Posterior cingulate gyrus (tissue), 11 donors: ENCODE measurements at regions of chr16 and their contacts with region 1.

Region 1: DNA sequence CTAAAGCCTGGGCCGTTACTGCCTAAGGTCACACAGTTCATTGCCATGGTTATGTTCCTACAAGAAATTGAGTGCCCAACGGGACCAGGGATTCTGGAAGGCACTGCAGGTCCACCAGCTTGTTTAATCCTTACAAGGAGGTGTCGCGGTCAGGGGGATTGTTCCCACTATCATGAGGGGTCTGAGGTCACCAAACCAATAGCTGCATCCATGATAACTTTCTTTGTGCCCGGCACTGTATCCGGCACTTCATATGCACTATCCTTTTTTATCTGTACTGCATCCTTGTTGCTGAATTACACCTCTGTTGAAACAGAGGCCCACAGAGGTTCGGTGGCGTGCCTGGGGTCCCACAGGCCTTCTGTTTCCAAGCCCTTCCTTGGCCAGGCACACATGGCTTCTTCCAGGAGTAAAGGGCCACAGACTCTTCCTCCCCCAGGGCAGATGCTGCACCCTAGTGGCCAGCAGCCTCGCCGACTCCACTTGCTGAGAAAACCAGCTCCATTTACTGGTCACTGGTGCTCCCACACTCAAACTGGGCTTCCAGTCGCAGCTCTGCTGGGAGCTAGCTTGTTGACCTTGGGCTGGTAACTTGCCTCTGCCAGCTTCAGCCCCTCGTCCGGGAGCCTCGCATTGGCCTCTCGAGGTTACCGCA is 82.0 kb upstream of the PLCG2 start:
- DNase-seq: peak in 8 of 10 donors; percentile 38 to 93 (median 58)

Region 2: GRCh38 chr16:81623363-81624102 is 73.6 kb before region 1 on chr16:
- intact Hi-C with region 1: loop called (anchors 10 kb)
- DNase-seq: peak in 6 of 10 donors; percentile 22 to 64 (median 58)

Region 3: DNA sequence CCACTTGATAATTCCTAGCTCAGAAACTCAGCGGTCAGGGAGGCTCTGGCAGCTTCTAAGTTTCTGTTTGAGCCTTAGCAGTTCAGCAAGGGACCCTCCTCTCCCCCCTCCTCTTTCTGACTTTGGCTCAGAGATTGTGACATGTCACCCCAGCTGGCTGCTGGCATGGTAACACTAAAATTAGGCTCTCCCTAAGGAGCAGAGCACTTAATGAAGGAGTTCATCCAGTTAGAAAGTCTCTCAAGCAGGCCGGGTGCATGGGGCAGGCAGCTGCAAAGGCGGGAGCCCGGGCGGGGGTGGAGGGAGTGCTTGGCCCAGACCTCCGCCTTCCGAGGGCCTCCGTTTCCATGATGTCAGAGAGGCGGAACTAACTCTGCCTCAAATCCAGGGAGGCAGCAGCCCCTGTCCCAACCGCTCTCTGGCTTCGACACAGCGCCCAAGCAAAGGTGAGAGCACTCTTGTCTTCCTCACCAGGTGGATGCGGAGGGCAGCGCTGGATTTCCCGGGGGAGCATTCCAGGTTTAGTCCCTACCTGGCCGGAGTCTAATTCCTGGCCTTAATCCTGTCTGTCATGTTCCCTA is 46.0 kb before region 1 on chr16:
- intact Hi-C with region 1: no loop called
- DNase-seq: no peak

Region 4: DNA sequence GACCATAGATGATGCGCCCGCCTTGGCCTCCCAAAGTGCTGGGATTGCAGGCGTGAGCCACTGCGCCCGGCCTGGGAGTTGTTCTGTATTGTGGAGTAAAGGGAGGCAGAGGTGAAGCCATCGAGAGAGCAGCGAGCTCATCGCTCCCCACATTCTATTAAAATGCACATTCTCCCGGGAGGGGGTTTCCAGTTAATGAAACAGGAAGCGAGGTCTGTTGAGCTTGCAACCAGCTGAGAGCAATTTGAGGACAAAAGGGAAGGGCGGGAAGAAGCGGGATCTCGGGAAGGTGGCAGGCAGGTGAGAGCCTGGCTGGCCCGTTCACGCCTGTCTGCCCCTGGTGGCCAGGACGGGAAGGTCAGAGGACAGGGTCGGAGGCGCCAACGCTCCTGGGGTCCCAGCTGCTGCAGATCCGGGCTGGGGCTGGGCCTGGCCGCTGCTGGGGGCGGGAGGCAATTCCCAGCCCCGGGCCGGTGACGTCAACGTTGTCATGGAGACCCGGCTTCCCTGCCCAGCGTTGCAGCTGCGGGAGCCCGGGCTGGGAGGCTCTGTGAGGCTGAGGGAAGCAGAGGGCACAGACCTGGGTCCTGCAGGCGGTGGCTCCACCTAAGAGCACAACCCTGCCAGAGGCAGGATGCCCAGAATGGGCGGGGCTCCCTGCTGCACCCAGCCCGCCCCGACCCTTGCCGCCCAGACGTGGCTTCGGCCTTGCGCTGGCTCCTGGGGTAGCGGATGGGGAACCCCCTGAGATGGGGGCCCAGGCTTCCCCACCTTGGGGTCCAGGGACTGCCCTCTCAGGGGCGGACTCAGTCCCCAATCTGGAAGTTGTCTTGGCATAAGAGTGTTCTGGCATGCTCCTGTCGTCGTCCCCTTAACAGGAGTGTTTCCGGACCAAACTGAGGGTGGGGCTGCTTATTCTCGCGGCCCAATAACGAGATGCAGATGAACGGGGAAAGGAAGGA is 33.3 kb after region 1 on chr16:
- intact Hi-C with region 1: no loop called
- DNase-seq: peak; percentile 75 to 98 (median 84)

Region 5: DNA sequence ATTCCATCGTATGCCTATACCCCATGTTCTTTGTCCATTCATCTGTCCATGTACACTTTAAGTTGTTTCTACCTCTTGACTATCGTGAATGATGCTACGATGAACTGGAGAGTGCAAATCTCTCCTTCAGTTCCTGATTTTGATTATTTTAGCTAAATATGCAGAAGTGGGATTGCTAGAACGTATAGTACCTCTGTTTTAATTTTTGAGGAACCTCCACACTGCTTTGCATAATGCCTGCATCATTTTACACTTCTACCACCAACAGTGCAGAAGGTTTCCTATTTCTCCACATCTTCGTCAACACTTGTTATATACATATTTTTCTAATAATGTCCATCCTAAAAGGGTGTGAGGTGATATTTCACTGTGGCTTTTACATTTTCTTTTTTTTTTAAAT is 270.3 kb after region 1 on chr16:
- intact Hi-C with region 1: no loop called
- DNase-seq: no peak